ENCODE measurements at regions of chr1 and their contacts with region 1.

Region 1: DNA sequence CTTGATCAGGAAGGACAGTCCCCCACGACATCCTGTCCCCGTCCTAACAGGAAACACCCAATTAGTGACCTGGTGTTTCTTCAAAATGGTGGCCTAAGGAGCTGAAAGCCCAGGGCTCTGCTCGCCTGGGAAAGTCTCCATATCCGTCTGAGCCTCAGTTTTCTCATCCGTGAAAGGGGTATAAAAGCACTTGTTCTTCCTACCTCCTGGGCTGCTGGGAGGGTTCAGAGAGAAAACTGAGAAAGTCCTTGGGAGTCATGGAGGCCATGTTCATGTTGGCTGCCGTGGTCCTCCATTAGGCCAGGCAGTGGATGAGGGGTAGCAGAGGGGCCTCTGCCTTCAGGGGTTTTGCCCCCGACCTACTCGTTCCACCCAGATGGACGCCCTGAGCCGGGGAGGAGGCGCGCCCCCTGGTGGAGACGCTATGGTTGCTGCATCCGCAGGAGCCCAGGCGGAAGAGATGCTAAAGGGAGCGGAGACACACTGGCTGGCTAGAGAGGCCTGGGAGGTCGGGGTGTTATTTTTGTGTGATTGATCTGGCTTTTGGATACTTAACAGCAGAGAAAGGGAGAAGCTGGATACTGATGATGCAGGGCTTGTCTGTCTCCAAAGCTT is 113.5 kb downstream of the PRDM2 start:
- DNase-seq: no peak
- H3K4me3 ChIP-seq: no peak overlapping the region
- H3K27ac ChIP-seq: peak overlapping the region in 1 of 59 donors; percentile 11
- H3K27me3 ChIP-seq: no peaks in the 10 kb centered on the region
- CTCF ChIP-seq: peak in 54 of 56 donors; percentile 27 to 67 (median 54)

Region 2: DNA sequence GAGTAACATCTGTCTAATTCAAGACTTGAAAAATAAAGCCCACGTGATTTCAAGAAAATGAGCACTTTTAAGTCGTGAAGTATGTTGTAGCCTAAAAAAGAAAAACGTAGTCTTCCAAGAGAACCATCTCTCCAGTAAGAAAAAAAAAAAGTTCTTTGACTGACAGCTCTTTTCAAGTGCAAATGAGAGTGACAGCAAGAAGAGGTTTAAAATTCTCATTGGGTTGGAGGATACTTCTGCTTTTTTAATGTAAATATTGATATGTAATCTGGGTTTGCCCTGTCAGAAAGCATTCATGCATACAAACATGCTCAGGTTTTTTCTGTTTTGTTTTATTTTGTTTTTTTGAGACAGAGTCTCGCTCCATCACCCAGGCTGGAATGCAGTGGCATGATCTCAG is 145.8 kb before region 1 on chr1:
- intact Hi-C with region 1: loop called in 1 of 2 experiments (anchors 5 kb)
- DNase-seq: no peak
- H3K4me3 ChIP-seq: no peak overlapping the region
- H3K27ac ChIP-seq: no peak overlapping the region
- H3K27me3 ChIP-seq: no peaks in the 10 kb centered on the region
- CTCF ChIP-seq: no peak

Region 3: DNA sequence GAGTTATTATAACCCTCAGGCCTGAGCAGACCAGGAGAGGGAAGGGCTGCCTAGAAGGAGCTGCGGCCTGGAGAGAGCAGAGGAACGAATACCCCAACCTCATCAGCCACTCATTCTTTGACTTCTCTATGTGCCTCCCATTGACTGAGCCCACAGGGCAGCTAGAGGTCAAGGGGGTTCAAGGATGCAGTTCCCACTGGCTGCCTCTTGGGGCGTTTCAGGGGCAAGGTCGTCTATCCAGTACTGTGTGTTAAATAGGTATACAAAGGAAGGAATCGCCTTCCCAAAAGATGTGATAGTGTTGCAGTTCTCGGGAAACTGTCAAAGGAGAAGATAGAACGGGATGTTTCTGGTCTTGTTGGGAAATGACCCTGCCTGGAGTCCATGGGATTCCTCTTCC is 137.1 kb after region 1 on chr1:
- intact Hi-C with region 1: loop called (anchors 10 kb)
- DNase-seq: no peak
- H3K4me3 ChIP-seq: no peak overlapping the region
- H3K27ac ChIP-seq: peak overlapping the region in 16 of 59 donors; percentile 4 to 76 (median 62)
- H3K27me3 ChIP-seq: no peaks in the 10 kb centered on the region
- CTCF ChIP-seq: peak in 2 of 56 donors; percentile 14 to 17

Measured in dorsolateral prefrontal cortex (tissue), 120 donors.